Ovary (tissue), 10 donors: ENCODE measurements at regions of chr19 and their contacts with region 1.

Region 1: DNA sequence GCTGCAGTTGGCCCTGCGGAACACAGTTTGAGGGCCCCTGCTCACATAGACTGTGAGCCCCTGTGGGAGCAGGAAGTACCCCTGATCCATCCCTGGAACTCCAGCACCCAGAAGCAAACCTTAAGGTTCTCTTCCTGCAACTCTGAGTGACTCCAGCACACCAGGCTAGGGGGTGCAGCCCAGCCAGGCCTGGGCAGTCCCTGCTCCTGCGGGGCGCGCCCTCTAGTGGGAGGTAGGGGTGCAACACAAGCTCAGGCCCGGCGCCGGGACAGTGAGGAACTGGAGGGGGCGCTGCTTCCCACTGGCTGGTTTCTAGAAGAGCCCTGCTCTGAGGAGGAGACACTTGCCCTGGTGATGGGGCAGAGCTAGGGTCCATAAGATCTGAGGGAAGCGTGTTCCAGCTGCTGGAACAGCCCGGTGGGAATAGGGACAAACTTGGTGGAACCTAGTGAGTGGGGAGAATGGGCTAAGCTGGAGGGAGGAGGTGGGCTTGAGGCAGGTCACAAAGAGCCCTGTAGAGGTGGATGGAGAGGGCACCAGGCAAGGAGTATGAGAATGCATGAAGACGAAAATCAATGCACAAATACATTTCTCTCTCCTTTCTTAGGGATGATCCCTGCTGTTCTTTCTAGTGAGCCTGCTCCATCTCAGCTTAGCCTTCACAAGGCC is 5.0 kb downstream of the ZSCAN5A start:
- DNase-seq: peak in 1 of 5 donors; percentile 51
- H3K4me3 ChIP-seq: no peak overlapping the region
- H3K27ac ChIP-seq: no peak overlapping the region
- H3K4me1 ChIP-seq: peaks cover 3% of the 10 kb centered on the region
- H3K27me3 ChIP-seq: no peaks in the 10 kb centered on the region
- CTCF ChIP-seq: no peak
- EP300 ChIP-seq: no peak
- POLR2A ChIP-seq: no peak

Region 2: GRCh38 chr19:56273563-56274117 is 36.0 kb before region 1 on chr19:
- intact Hi-C with region 1: loop called in 1 of 4 experiments (anchors 1 kb)
- DNase-seq: no peak
- H3K4me3 ChIP-seq: no peak overlapping the region
- H3K27ac ChIP-seq: no peak overlapping the region
- H3K4me1 ChIP-seq: no peaks in the 10 kb centered on the region
- H3K27me3 ChIP-seq: no peaks in the 10 kb centered on the region
- CTCF ChIP-seq: no peak
- EP300 ChIP-seq: no peak
- POLR2A ChIP-seq: no peak

Region 3: DNA sequence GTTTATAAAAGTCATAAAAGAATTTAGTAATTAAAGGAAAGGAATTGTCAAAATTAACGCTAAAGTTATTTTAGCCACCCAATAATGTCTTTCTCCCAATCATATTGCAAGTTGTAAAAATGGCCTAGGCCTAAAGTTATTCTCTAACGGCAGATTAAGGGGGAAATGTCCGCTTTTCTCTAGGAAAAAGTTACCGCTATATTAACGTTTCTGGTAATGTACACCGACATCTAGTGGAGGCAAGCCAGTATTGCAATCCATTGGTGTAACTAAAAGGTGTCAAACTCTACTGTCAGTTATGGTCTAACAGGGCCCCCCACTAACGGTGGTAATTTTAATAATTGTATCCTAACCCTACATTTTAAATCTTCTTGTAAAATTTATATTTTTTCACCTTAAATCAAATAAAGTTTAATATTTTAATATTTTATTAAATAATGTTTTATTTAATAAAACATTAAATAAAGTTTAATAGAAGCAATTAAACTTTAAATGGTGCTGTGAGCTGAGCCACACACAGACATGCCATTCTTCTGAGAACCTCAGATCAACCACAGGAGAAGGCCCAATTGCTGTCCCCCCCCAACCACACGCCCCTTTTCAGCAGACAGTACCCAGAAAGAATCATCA is 40.9 kb after region 1 on chr19:
- intact Hi-C with region 1: no loop called
- DNase-seq: peak in 3 of 5 donors; percentile 21 to 67 (median 43)
- H3K4me3 ChIP-seq: no peak overlapping the region
- H3K27ac ChIP-seq: no peak overlapping the region
- H3K4me1 ChIP-seq: no peaks in the 10 kb centered on the region
- H3K27me3 ChIP-seq: no peaks in the 10 kb centered on the region
- CTCF ChIP-seq: peak; percentile 34 to 79 (median 78)
- EP300 ChIP-seq: no peak
- POLR2A ChIP-seq: no peak

Region 4: GRCh38 chr19:56732976-56733375 is 423.3 kb after region 1 on chr19:
- intact Hi-C with region 1: no loop called
- DNase-seq: no peak
- H3K4me3 ChIP-seq: no peak overlapping the region
- H3K27ac ChIP-seq: no peak overlapping the region
- H3K4me1 ChIP-seq: no peaks in the 10 kb centered on the region
- H3K27me3 ChIP-seq: no peaks in the 10 kb centered on the region
- CTCF ChIP-seq: no peak
- EP300 ChIP-seq: no peak
- POLR2A ChIP-seq: no peak